ENCODE measurements at regions of chr5 and their contacts with region 1.

Region 1: GRCh38 chr5:126776497-126777256 is at the start of gene LMNB1:
- DNase-seq: peak; percentile 93
- H3K4me3 ChIP-seq: peak within 1 kb of the TSS; percentile 88 to 97 (median 91)
- H3K27ac ChIP-seq: peak within 1 kb of the TSS; percentile 80
- H3K4me1 ChIP-seq: peaks cover 17% of the 10 kb centered on the region
- H3K27me3 ChIP-seq: no peaks in the 10 kb centered on the region
- CTCF ChIP-seq: peak in 1 of 2 donors; percentile 11
- total RNA-seq, gene LMNB1: 5.2 to 36.3 TPM

Region 2: DNA sequence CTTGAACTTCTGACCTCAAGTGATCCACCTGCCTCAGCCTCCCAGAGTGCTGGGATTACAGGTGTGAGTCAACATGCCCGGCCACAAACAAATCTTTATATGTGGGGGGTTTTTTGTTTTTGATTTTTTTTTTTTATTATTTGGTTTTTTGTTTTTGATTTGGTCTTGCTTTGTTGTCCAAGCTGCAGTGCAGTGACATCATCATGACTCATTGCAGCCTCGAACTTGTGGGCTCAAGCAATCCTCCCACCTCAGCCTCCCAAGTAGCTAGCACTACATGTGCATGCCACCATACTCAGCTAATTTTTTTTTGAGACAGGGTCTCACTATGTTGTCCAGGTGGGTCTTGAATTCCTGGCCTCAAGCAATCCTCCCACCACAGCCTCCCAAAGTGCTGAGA is 224.1 kb before region 1 on chr5:
- CTCF ChIA-PET with region 1: no interaction called
- dilution Hi-C with region 1: no loop called
- in situ Hi-C with region 1: no loop called
- intact Hi-C with region 1: no loop called
- DNase-seq: no peak
- H3K4me3 ChIP-seq: no peak overlapping the region
- H3K27ac ChIP-seq: no peak overlapping the region
- H3K4me1 ChIP-seq: no peaks in the 10 kb centered on the region
- H3K27me3 ChIP-seq: no peaks in the 10 kb centered on the region
- CTCF ChIP-seq: no peak

Region 3: GRCh38 chr5:126594676-126595485 is 181.8 kb before region 1 on chr5 and contains the start of gene ALDH7A1:
- CTCF ChIA-PET with region 1: interaction called, 24 read pairs
- dilution Hi-C with region 1: no loop called
- in situ Hi-C with region 1: no loop called
- intact Hi-C with region 1: loop called (anchors 2 kb)
- DNase-seq: peak; percentile 76
- H3K4me3 ChIP-seq: peak within 1 kb of the TSS; percentile 67 to 78 (median 74)
- H3K27ac ChIP-seq: peak within 1 kb of the TSS; percentile 74
- H3K4me1 ChIP-seq: peaks cover 31% of the 10 kb centered on the region
- H3K27me3 ChIP-seq: no peaks in the 10 kb centered on the region
- CTCF ChIP-seq: peak; percentile 28 to 59
- total RNA-seq, gene ALDH7A1: 48.2 to 137 TPM

Region 4: GRCh38 chr5:126600631-126601511 is 175.8 kb before region 1 on chr5 and contains the start of gene PHAX:
- CTCF ChIA-PET with region 1: no interaction called
- dilution Hi-C with region 1: no loop called
- in situ Hi-C with region 1: no loop called
- intact Hi-C with region 1: loop called (anchors 2 kb)
- DNase-seq: peak; percentile 79
- H3K4me3 ChIP-seq: peak within 1 kb of the TSS; percentile 96 to 98 (median 97)
- H3K27ac ChIP-seq: peak within 1 kb of the TSS; percentile 86
- H3K4me1 ChIP-seq: peaks cover 33% of the 10 kb centered on the region
- H3K27me3 ChIP-seq: no peaks in the 10 kb centered on the region
- CTCF ChIP-seq: peak; percentile 54 to 70
- total RNA-seq, gene PHAX: 49.0 to 52.4 TPM

Region 5: GRCh38 chr5:126656396-126657007 is 120.2 kb before region 1 on chr5:
- CTCF ChIA-PET with region 1: interaction called, 12 read pairs
- dilution Hi-C with region 1: no loop called
- in situ Hi-C with region 1: no loop called
- intact Hi-C with region 1: loop called (anchors 1 kb)
- DNase-seq: no peak
- H3K4me3 ChIP-seq: no peak overlapping the region
- H3K27ac ChIP-seq: no peak overlapping the region
- H3K4me1 ChIP-seq: no peaks in the 10 kb centered on the region
- H3K27me3 ChIP-seq: no peaks in the 10 kb centered on the region
- CTCF ChIP-seq: peak; percentile 87 to 88

Region 6: DNA sequence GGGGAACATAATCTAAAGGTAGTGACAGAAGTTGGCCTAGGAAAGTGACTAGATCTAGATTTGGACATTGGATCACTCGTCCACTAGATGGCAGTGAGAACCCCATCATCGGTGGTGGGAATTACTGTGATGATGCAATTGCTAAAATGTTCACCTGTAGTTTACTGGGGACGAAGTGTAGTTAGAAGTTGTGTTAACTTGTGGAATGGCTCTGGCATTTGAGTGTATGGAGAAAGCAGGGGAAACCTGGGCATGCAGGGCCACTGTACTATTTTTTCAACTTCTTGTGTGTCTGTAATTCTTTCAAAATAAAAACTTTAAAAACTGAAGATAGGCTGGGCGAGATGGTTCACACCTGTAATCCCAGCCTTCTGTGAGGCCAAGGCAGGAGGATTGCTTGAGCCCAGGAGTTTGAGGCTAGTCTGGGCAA is 100.5 kb before region 1 on chr5:
- CTCF ChIA-PET with region 1: interaction called, 5 read pairs
- dilution Hi-C with region 1: no loop called
- in situ Hi-C with region 1: loop called (anchors 5 kb)
- intact Hi-C with region 1: loop called (anchors 1 kb)
- DNase-seq: peak; percentile 57
- H3K4me3 ChIP-seq: no peak overlapping the region
- H3K27ac ChIP-seq: no peak overlapping the region
- H3K4me1 ChIP-seq: no peaks in the 10 kb centered on the region
- H3K27me3 ChIP-seq: no peaks in the 10 kb centered on the region
- CTCF ChIP-seq: peak; percentile 74 to 84

Region 7: GRCh38 chr5:126801992-126802294 is 25.3 kb after region 1 on chr5:
- CTCF ChIA-PET with region 1: interaction called, 8 read pairs
- dilution Hi-C with region 1: no loop called
- in situ Hi-C with region 1: no loop called
- intact Hi-C with region 1: loop called (anchors 2 kb)
- DNase-seq: peak; percentile 22
- H3K4me3 ChIP-seq: no peak overlapping the region
- H3K27ac ChIP-seq: no peak overlapping the region
- H3K4me1 ChIP-seq: peaks cover 5% of the 10 kb centered on the region
- H3K27me3 ChIP-seq: no peaks in the 10 kb centered on the region
- CTCF ChIP-seq: peak; percentile 20 to 47

Region 8: GRCh38 chr5:126808521-126808988 is 31.9 kb after region 1 on chr5:
- CTCF ChIA-PET with region 1: interaction called, 5 read pairs
- dilution Hi-C with region 1: no loop called
- in situ Hi-C with region 1: no loop called
- intact Hi-C with region 1: loop called (anchors 2 kb)
- DNase-seq: peak; percentile 12
- H3K4me3 ChIP-seq: no peak overlapping the region
- H3K27ac ChIP-seq: no peak overlapping the region
- H3K4me1 ChIP-seq: peaks cover 5% of the 10 kb centered on the region
- H3K27me3 ChIP-seq: no peaks in the 10 kb centered on the region
- CTCF ChIP-seq: peak; percentile 33 to 47

Measured in mammary epithelial cell (primary cell).